ENCODE measurements at regions of chr13 and their contacts with region 1.

Region 1: DNA sequence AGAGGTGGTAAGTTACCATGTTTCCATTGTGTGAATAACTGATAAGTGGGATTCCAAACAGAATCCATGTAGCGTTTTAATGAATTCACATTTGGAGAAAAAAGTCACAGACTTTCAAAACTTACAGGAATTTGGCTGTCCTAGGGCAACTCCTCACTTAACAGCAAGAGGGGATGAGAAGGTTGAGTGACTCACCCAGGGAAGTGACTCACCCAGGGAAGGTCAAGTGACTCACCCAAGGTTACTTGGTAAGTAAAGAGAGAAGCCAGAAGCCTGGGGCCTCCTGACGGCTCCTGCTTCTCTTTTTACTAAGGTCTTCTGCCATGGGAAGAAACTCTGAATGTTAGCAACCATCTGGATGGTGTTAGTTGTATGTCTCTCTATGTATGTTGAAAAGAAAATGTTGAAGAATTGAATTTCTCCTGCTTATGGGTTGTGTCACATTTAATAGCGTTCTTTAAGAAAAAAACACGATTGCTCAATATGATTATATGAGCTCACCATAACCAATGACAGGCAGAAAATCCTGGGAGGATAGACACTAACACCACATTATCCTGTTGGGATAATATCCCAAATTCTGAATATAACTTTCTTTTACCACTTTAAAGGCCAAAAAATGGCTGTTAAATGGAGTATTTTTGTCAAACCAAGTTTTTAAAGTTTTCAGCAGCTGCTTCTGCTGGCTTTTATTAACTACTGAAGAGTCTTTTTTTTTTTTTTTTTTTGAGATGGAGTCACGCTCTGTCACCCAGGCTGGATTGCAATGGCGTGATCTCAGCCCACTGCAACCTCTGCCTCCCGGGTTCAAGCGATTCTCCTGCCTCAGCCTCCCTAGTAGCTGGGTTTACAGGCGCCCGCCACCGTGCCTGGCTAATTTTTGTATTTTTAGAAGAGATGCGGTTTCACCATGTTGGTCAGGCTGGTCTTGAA is 195.6 kb downstream of the GGACT start:
- DNase-seq: peak; percentile 60
- H3K4me3 Mint-ChIP-seq: peak overlapping the region; percentile 53
- H3K27ac Mint-ChIP-seq: peak overlapping the region; percentile 93
- H3K4me1 Mint-ChIP-seq: peaks cover 38% of the 10 kb centered on the region
- H3K27me3 Mint-ChIP-seq: no peaks in the 10 kb centered on the region

Region 2: GRCh38 chr13:99501184-99501847 is 891.7 kb before region 1 on chr13 and contains the start of gene TM9SF2:
- intact Hi-C with region 1: loop called (anchors 5 kb)
- DNase-seq: peak; percentile 95
- H3K4me3 Mint-ChIP-seq: peak within 1 kb of the TSS; percentile 96
- H3K27ac Mint-ChIP-seq: peak within 1 kb of the TSS; percentile 95
- H3K4me1 Mint-ChIP-seq: peaks cover 70% of the 10 kb centered on the region
- H3K27me3 Mint-ChIP-seq: peaks cover 1% of the 10 kb centered on the region
- total RNA-seq, gene TM9SF2: 59.1 and 62.6 TPM in 2 replicates

Region 3: DNA sequence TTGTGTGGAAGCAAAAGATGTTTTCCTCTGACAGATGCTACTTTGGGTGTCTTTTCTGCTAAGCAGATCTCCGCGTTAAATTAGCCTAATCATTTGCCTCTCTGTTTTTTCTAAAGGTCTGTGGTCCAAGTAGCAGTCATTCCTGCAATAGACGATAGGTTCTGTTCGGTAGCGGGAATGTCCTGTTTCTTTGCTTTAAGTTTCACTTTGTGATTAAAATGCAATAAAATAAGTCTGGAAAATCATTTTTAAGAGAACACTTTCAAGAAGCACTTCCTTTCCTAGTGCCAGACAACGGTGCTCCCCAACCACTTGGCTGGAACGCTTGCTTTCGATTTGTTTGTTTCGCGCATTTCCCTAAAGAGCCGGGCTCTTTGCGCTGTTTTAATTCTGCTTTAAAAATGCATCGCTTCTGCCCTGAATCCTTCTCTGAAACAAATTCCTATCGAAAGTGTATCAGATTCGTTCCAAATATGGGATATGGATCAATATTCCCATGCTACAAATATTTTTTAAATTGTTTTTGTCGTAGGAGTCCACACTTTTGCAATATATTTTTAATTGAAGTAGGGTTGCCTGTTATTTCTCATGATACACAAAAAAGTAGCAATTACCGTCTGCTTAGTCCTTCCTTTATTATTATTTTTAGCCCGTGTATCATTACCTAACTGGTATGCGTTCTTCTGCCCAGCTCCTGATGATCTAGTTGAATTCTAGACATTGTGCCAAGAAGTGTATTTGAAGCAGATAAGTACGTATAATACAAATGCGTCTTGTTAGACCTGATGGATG is 397.2 kb before region 1 on chr13:
- intact Hi-C with region 1: loop called (anchors 2 kb)
- DNase-seq: no peak
- H3K4me3 Mint-ChIP-seq: peak overlapping the region; percentile 45
- H3K27ac Mint-ChIP-seq: peak overlapping the region; percentile 44
- H3K4me1 Mint-ChIP-seq: peaks cover 30% of the 10 kb centered on the region
- H3K27me3 Mint-ChIP-seq: peaks cover 74% of the 10 kb centered on the region

Region 4: GRCh38 chr13:100254002-100254401 is 139.0 kb before region 1 on chr13:
- intact Hi-C with region 1: no loop called
- DNase-seq: no peak
- H3K4me3 Mint-ChIP-seq: no peak overlapping the region
- H3K27ac Mint-ChIP-seq: no peak overlapping the region
- H3K4me1 Mint-ChIP-seq: no peaks in the 10 kb centered on the region
- H3K27me3 Mint-ChIP-seq: no peaks in the 10 kb centered on the region

Region 5: DNA sequence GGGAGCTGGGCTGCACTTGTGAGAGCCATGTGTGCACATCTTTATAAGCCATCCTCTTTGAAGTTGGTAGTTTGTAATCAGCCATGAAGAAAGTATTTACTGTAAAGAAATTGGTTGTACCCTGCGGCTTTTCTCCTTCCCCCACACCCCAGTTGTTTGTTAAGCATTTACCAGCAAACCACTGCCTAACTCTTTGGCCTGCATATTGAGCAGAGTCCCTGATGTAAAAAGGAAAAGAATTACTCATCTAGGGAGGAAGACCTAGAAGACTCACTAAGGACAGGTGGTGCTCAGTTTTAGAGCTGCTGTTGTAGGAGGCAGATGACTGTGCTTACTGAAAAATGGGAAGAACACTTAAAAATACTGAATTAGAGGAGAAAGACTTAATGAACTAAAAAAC is 58.8 kb before region 1 on chr13:
- intact Hi-C with region 1: loop called (anchors 2 kb)
- DNase-seq: peak; percentile 23
- H3K4me3 Mint-ChIP-seq: no peak overlapping the region
- H3K27ac Mint-ChIP-seq: peak overlapping the region; percentile 29
- H3K4me1 Mint-ChIP-seq: peaks cover 10% of the 10 kb centered on the region
- H3K27me3 Mint-ChIP-seq: no peaks in the 10 kb centered on the region

Region 6: GRCh38 chr13:100409132-100409531 is 16.2 kb after region 1 on chr13:
- intact Hi-C with region 1: no loop called
- DNase-seq: no peak
- H3K4me3 Mint-ChIP-seq: no peak overlapping the region
- H3K27ac Mint-ChIP-seq: no peak overlapping the region
- H3K4me1 Mint-ChIP-seq: no peaks in the 10 kb centered on the region
- H3K27me3 Mint-ChIP-seq: no peaks in the 10 kb centered on the region

Region 7: DNA sequence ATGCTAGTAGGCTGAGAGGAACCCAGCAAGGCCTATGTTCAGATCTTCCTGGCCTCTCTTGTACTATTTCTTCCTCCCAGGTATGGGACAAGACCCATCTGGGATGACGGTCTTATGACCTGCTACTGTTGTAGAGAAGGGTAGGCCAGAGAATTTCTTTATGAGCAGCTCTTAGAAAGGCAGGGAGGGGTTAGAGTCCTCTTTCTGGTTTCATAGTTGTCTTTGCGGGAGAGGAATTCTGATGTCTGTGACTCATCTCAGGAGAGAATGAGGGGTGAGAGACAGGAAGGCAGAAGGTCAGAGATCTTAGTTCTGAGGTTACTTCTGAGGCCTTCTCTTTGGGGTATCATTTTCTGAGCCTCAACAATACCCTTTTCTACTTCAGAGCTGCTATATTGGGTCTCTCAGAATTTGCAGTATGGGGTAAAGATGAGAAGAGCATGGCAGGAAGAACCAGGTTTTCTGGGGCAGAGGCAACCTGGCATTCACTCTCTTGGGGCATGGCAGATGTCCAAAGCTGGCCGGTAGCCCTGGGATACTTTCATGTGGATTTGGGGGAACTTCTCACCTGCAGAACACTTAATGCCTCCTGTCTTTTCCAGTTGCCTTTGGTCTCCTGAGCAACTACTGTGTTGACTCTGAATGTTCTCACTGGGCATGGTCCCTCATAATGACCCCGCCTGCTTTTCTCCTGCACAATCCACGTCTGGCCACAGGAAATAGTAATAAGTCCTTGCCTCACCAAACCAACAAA is 41.2 kb after region 1 on chr13:
- intact Hi-C with region 1: loop called (anchors 1 kb)
- DNase-seq: peak; percentile 16
- H3K4me3 Mint-ChIP-seq: peak overlapping the region; percentile 1
- H3K27ac Mint-ChIP-seq: peak overlapping the region; percentile 56
- H3K4me1 Mint-ChIP-seq: peaks cover 55% of the 10 kb centered on the region
- H3K27me3 Mint-ChIP-seq: no peaks in the 10 kb centered on the region

Region 8: DNA sequence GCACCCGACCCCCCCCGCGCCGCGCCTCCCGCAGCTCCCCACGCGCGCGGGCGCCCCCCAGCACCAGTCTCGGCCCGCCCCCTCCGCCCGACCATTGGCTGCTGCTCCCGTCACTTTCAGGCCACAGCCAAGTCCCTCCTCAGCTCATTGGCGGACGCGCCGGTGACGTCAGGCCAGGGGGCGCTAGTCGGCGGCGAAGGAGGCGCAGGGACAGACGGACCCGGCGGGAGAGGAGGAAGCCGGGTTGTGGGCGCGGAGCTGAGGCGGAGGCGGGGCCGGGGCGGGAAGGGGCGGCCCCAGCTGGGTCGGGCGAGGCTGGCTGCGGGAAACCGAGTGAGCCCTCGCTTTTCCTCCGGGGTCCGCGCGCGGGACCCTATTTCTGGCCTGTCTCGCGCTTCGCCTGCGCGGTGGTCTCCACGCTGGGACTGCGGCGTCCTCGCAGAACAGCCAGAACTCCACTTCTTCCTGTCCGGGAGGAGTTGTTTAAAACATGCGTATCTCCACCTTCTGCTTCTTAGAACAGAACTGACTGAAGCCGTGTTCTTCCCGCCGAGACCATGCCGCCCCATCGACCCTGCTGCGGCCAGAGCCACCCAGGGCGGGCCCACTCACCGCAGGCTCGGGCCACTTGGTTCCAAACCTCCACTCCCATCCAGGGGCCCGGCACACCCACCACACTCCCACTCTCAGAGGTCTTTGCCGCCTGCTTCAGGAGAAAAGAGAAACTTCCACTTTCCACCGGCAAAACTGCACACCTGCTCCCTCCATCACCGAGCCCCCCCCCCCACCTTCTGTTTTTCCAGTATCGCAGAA is 282.1 kb after region 1 on chr13:
- intact Hi-C with region 1: loop called (anchors 2 kb)
- DNase-seq: peak; percentile 100
- H3K4me3 Mint-ChIP-seq: peak overlapping the region; percentile 87
- H3K27ac Mint-ChIP-seq: peak overlapping the region; percentile 86
- H3K4me1 Mint-ChIP-seq: peaks cover 31% of the 10 kb centered on the region
- H3K27me3 Mint-ChIP-seq: peaks cover 10% of the 10 kb centered on the region

Measured in activated T-helper 1 cell treated with anti-CD3 and anti-CD28 coated beads, Interleukin-12 subunit alpha, Interleukin-12 subunit beta, Interleukin-2, Interleukin-4 antibody, amounts not matched to agents 30 ng/mL and 10 ng/mL and 1 ng/mL, durations not matched to agents 14 hours and 24 hours and 36 hours (primary cell).